CD8-positive, alpha-beta T cell (primary cell): ENCODE measurements at regions of chr20 and their contacts with region 1.

Region 1: GRCh38 chr20:35771689-35772562 is at the start of gene PHF20:
- DNase-seq: peak; percentile 100
- ATAC-seq: peak; percentile 82
- H3K4me3 ChIP-seq: peak within 1 kb of the TSS; percentile 65 to 71
- H3K4me3 Mint-ChIP-seq: peak within 1 kb of the TSS; percentile 91
- H3K27ac ChIP-seq: peak within 1 kb of the TSS; percentile 87 to 95
- H3K27ac Mint-ChIP-seq: peak within 1 kb of the TSS; percentile 100
- H3K4me1 ChIP-seq: peaks cover 89% of the 10 kb centered on the region
- H3K4me1 Mint-ChIP-seq: peaks cover 81% of the 10 kb centered on the region
- H3K27me3 ChIP-seq: no peaks in the 10 kb centered on the region
- H3K27me3 Mint-ChIP-seq: no peaks in the 10 kb centered on the region
- CTCF ChIP-seq: no peak
- total RNA-seq, gene PHF20: 101 to 107 TPM

Region 2: DNA sequence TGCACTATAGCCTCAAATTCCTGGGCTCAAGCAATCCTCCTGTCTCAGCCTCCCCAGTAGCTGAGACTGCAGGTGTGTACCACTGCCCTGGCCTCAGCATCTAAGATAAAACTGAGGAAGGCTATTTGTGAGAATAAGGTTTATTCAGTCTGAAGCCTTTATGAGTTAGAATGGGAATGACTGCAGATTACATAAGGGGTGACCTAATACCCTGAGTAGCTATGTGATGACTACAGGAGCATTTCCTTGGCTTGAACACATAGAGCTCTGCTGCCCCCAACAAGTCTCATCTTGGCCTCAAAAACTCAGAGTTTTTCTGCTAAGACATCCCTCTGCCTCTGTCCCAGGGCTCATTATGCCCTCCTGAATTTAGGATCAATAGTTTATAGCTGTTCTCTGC is 823.9 kb before region 1 on chr20:
- CTCF ChIA-PET with region 1: no interaction called
- POLR2A ChIA-PET with region 1: no interaction called
- intact Hi-C with region 1: no loop called
- DNase-seq: no peak
- ATAC-seq: no peak
- H3K4me3 ChIP-seq: no peak overlapping the region
- H3K4me3 Mint-ChIP-seq: no peak overlapping the region
- H3K27ac ChIP-seq: no peak overlapping the region
- H3K27ac Mint-ChIP-seq: no peak overlapping the region
- H3K4me1 ChIP-seq: no peaks in the 10 kb centered on the region
- H3K4me1 Mint-ChIP-seq: peaks cover 6% of the 10 kb centered on the region
- H3K27me3 ChIP-seq: no peaks in the 10 kb centered on the region
- H3K27me3 Mint-ChIP-seq: no peaks in the 10 kb centered on the region
- CTCF ChIP-seq: no peak

Region 3: DNA sequence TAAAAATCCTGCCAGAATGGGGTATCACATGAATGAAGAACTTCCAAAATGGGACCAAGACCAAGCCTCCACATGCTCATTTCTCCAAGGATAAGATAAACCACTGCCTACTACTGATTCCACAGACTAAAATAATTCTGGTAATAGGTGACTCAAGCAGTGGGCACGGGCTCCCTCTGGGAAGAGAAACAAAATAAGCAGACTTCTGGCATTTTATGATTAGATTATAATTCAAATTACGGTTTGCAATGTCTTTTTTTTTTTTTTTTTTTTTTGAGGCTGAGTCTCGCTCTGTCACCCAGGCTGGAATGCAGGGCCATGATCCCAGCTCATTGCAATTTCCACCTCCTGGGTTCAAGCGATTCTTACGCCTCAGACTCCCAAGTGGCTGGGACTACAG is 376.2 kb before region 1 on chr20:
- CTCF ChIA-PET with region 1: no interaction called
- POLR2A ChIA-PET with region 1: no interaction called
- intact Hi-C with region 1: no loop called
- DNase-seq: no peak
- ATAC-seq: no peak
- H3K4me3 ChIP-seq: no peak overlapping the region
- H3K4me3 Mint-ChIP-seq: no peak overlapping the region
- H3K27ac ChIP-seq: no peak overlapping the region
- H3K27ac Mint-ChIP-seq: no peak overlapping the region
- H3K4me1 ChIP-seq: no peaks in the 10 kb centered on the region
- H3K4me1 Mint-ChIP-seq: peaks cover 42% of the 10 kb centered on the region
- H3K27me3 ChIP-seq: no peaks in the 10 kb centered on the region
- H3K27me3 Mint-ChIP-seq: no peaks in the 10 kb centered on the region
- CTCF ChIP-seq: no peak

Region 4: GRCh38 chr20:35454881-35455609 is 316.9 kb before region 1 on chr20 and contains the start of gene CEP250:
- CTCF ChIA-PET with region 1: no interaction called
- POLR2A ChIA-PET with region 1: no interaction called
- intact Hi-C with region 1: loop called (anchors 10 kb)
- DNase-seq: peak; percentile 86 to 96 (median 95)
- ATAC-seq: peak; percentile 98
- H3K4me3 ChIP-seq: peak within 1 kb of the TSS; percentile 62 to 94
- H3K4me3 Mint-ChIP-seq: peak within 1 kb of the TSS; percentile 94
- H3K27ac ChIP-seq: peak within 1 kb of the TSS; percentile 52 to 94
- H3K27ac Mint-ChIP-seq: peak within 1 kb of the TSS; percentile 97
- H3K4me1 ChIP-seq: peaks cover 10% of the 10 kb centered on the region
- H3K4me1 Mint-ChIP-seq: peaks cover 21% of the 10 kb centered on the region
- H3K27me3 ChIP-seq: no peaks in the 10 kb centered on the region
- H3K27me3 Mint-ChIP-seq: no peaks in the 10 kb centered on the region
- CTCF ChIP-seq: no peak
- total RNA-seq, gene CEP250: 33.4 to 34.4 TPM

Region 5: DNA sequence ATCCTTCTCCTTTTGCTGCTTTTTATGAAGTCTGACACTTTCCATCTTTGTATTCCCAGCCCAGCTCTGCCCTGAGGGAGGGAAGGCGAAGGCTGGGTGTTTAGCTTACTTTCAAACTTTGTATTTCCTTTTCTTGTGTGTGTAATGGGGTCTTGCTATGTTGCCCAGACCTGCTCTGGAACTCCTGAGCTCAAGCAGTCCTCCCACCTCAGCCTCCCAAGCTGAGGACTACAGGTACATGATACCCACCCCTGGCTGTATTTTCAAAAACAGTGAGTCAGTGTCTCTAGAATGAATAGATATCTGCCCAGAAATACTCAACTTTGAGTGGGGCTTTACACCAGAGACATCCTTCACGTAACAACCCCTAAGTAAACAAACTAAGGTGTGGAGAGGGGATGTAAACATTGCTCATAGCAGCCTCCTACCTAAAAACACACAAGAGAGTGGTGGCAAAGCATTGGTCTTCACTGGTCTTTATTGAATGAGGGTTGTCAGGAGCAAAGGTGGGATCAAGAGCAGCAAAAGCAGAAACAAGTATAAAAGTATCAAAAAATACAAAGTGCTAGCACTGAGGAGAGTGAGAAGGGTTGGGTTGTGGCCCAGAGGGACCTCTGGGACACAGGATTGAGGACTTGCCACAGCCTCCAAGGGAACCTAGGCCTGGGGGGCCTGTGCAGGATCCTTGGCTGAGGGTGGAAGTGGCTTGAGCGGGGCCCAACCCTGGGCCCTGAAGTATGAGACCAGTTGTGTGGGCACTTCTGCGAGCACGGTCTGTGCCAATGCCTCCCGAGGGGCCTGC is 146.1 kb before region 1 on chr20:
- CTCF ChIA-PET with region 1: no interaction called
- POLR2A ChIA-PET with region 1: no interaction called
- intact Hi-C with region 1: no loop called
- DNase-seq: peak in 1 of 9 experiments; percentile 31
- ATAC-seq: no peak
- H3K4me3 ChIP-seq: no peak overlapping the region
- H3K4me3 Mint-ChIP-seq: no peak overlapping the region
- H3K27ac ChIP-seq: no peak overlapping the region
- H3K27ac Mint-ChIP-seq: peak overlapping the region; percentile 65
- H3K4me1 ChIP-seq: no peaks in the 10 kb centered on the region
- H3K4me1 Mint-ChIP-seq: no peaks in the 10 kb centered on the region
- H3K27me3 ChIP-seq: no peaks in the 10 kb centered on the region
- H3K27me3 Mint-ChIP-seq: no peaks in the 10 kb centered on the region
- CTCF ChIP-seq: no peak

Region 6: GRCh38 chr20:35699127-35699975 is 72.6 kb before region 1 on chr20 and contains the starts of genes NFS1 and ROMO1:
- CTCF ChIA-PET with region 1: interaction called, 3 read pairs
- POLR2A ChIA-PET with region 1: interaction called, 4 read pairs
- intact Hi-C with region 1: loop called (anchors 1 to 2 kb)
- DNase-seq: peak; percentile 68 to 93 (median 87)
- ATAC-seq: peak; percentile 88
- H3K4me3 ChIP-seq: peak within 1 kb of the TSS; percentile 94 to 98
- H3K4me3 Mint-ChIP-seq: peak within 1 kb of the TSS; percentile 92
- H3K27ac ChIP-seq: peak within 1 kb of the TSS; percentile 85 to 98
- H3K27ac Mint-ChIP-seq: peak within 1 kb of the TSS; percentile 95
- H3K4me1 ChIP-seq: peaks cover 18% of the 10 kb centered on the region
- H3K4me1 Mint-ChIP-seq: peaks cover 42% of the 10 kb centered on the region
- H3K27me3 ChIP-seq: no peaks in the 10 kb centered on the region
- H3K27me3 Mint-ChIP-seq: no peaks in the 10 kb centered on the region
- CTCF ChIP-seq: peak; percentile 21
- total RNA-seq, gene NFS1: 10.7 to 13.1 TPM
- total RNA-seq, gene ROMO1: 39.2 to 43.8 TPM

Region 7: DNA sequence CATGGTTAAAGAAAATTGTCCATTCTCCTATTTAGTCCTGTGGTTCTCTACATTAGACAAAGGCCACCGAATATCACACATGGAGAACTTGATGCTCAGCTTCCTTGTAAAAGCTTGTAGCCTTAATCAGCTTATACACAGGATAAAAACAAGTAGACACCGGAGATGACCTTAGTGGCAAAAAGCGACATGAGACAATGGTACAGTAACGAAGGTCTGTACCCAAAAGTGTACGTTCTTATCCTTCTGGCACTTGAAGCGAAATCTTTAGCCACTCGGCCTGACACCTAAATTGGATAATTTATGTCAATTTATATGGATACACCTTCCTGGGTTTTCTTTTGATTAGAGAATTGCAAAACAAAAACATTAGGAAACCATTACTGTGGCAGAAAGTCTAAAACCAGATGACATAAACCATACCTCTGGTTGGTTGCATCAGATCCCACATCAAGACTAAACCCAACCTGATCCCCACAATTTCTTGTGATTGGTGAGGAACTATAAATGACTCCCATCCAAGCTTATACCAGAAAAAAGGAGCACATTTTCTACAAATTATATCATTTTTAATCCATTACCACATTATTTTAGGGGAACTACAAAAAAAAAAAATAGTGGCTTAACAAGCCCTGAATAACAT is 36.0 kb before region 1 on chr20:
- CTCF ChIA-PET with region 1: interaction called, 12 read pairs
- POLR2A ChIA-PET with region 1: interaction called, 370 read pairs
- intact Hi-C with region 1: no loop called
- DNase-seq: no peak
- ATAC-seq: no peak
- H3K4me3 ChIP-seq: peak overlapping the region in 1 of 2 experiments; percentile 10
- H3K4me3 Mint-ChIP-seq: peak overlapping the region; percentile 64
- H3K27ac ChIP-seq: peak overlapping the region in 1 of 2 experiments; percentile 37
- H3K27ac Mint-ChIP-seq: peak overlapping the region; percentile 69
- H3K4me1 ChIP-seq: peaks cover 85% of the 10 kb centered on the region
- H3K4me1 Mint-ChIP-seq: peaks cover 72% of the 10 kb centered on the region
- H3K27me3 ChIP-seq: no peaks in the 10 kb centered on the region
- H3K27me3 Mint-ChIP-seq: no peaks in the 10 kb centered on the region
- CTCF ChIP-seq: no peak

Region 8: GRCh38 chr20:35791821-35792220 is 19.9 kb after region 1 on chr20:
- CTCF ChIA-PET with region 1: no interaction called
- POLR2A ChIA-PET with region 1: interaction called, 4 read pairs
- intact Hi-C with region 1: loop called in 1 of 2 experiments (anchors 2 kb)
- DNase-seq: no peak
- ATAC-seq: no peak
- H3K4me3 ChIP-seq: no peak overlapping the region
- H3K4me3 Mint-ChIP-seq: no peak overlapping the region
- H3K27ac ChIP-seq: no peak overlapping the region
- H3K27ac Mint-ChIP-seq: no peak overlapping the region
- H3K4me1 ChIP-seq: peaks cover 21% of the 10 kb centered on the region
- H3K4me1 Mint-ChIP-seq: peaks cover 47% of the 10 kb centered on the region
- H3K27me3 ChIP-seq: no peaks in the 10 kb centered on the region
- H3K27me3 Mint-ChIP-seq: no peaks in the 10 kb centered on the region
- CTCF ChIP-seq: no peak